Heart right ventricle (tissue), 16 donors: ENCODE measurements at regions of chr1 and their contacts with region 1.

Region 1: DNA sequence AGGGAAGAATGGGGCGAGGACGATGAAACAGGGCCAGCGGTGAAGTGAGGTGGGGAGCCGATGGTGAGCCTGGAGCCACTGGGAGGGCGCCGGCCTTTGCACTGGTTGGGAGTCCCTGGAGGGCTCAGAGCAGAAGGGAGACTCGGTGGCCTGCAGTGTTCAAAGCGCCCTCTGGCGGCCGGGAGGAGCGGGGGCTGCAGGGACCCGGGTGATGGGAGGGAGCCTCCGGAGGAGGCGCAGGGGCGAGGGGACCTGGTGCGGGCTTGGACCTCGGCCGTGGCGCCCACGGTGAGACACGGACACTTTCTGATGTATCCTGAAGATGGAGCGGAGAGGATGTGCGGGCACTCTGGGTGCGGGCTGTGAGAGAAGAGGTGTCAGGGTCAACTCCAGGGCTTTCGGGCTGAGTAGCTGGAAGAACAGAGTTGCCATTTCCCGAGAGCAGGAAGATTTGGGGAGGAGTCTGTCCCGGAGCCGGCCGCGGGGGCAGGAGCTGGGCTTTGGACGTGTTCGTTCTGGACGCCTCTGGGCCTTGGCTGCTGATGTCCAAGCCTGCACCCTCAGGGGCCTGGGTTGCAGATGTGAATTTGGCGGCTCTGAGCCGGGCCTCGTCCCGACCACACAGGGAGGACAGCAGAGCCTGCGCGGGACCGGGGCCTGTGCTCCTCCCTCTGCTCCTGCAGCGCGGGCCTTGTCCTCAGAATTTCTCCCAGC is 29.7 kb downstream of the HEYL start:
- DNase-seq: peak; percentile 59 to 82
- ATAC-seq: peak; percentile 69 to 90 (median 80)
- H3K4me3 ChIP-seq: peak overlapping the region in 1 of 10 donors; percentile 1
- H3K27ac ChIP-seq: peak overlapping the region in 8 of 10 donors; percentile 22 to 53 (median 42)
- H3K4me1 ChIP-seq: peaks cover 3 to 16% (median 11%) of the 10 kb centered on the region in 9 donors
- H3K27me3 ChIP-seq: peaks cover 0 to 2% (median 0%) of the 10 kb centered on the region in 7 donors
- CTCF ChIP-seq: peak; percentile 36 to 94 (median 74)

Region 2: GRCh38 chr1:39653546-39654031 is 43.8 kb after region 1 on chr1:
- intact Hi-C with region 1: loop called (anchors 1 to 5 kb)
- DNase-seq: peak; percentile 74 to 82
- ATAC-seq: peak; percentile 58 to 77 (median 64)
- H3K4me3 ChIP-seq: peak overlapping the region in 1 of 10 donors; percentile 10
- H3K27ac ChIP-seq: peak overlapping the region in 3 of 10 donors; percentile 66 to 76 (median 72)
- H3K4me1 ChIP-seq: peaks cover 7 to 67% (median 22%) of the 10 kb centered on the region in 9 donors
- H3K27me3 ChIP-seq: peaks cover 0 to 11% (median 0%) of the 10 kb centered on the region in 7 donors
- CTCF ChIP-seq: peak; percentile 87 to 96 (median 92)

Region 3: GRCh38 chr1:39711104-39711965 is 101.6 kb after region 1 on chr1:
- intact Hi-C with region 1: loop called in 5 of 10 experiments (anchors 5 kb)
- DNase-seq: no peak
- ATAC-seq: no peak
- H3K4me3 ChIP-seq: no peak overlapping the region
- H3K27ac ChIP-seq: no peak overlapping the region
- H3K4me1 ChIP-seq: peaks cover 0 to 3% (median 0%) of the 10 kb centered on the region in 9 donors
- H3K27me3 ChIP-seq: peaks cover 0 to 21% (median 17%) of the 10 kb centered on the region in 7 donors
- CTCF ChIP-seq: no peak

Region 4: DNA sequence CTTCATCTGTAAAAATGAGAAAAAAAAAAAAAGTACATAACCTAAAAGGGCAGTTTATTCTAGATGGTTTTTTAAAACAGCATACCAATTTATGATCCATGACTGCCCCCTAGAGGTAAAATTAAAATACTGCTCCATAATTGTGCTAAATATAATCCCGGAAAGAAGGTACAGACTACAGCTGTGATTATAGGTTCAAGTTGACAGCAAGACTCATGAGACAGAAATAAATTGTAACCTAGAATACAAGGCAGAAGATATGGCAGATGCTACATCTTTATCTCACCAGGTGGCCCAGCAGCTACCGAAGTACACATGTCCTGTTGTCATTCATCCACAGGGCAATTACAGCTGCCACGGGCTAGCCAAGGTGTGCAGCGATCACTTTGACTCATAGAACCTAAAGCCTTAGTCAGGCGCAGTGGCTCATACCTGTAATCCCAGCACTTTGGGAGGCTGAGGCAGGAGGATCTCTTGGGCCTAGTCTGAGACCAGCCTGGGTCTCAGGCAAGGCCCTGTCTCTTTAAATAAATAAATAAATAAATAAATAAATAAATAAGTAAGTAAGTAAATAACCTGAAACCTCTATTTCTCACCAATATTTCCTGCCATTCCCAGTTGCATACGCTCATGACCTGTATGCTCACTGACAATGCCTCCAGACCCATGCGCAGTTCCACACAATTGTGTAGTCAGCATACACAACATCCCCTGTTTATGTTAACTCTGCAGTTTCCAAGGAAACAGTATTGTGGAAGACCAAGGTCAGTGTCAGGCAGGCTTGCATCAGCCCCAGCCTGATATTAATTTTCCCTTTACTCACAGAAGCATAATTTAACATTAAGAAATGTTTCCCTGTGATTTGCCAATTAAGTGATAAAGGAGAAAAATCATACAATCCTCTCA is 110.6 kb after region 1 on chr1:
- intact Hi-C with region 1: loop called (anchors 1 to 5 kb)
- DNase-seq: no peak
- ATAC-seq: peak in 5 of 8 donors; percentile 47 to 72 (median 59)
- H3K4me3 ChIP-seq: no peak overlapping the region
- H3K27ac ChIP-seq: no peak overlapping the region
- H3K4me1 ChIP-seq: peaks cover 0 to 4% (median 0%) of the 10 kb centered on the region in 9 donors
- H3K27me3 ChIP-seq: peaks cover 0 to 51% (median 30%) of the 10 kb centered on the region in 7 donors
- CTCF ChIP-seq: peak; percentile 56 to 82 (median 73)

Region 5: DNA sequence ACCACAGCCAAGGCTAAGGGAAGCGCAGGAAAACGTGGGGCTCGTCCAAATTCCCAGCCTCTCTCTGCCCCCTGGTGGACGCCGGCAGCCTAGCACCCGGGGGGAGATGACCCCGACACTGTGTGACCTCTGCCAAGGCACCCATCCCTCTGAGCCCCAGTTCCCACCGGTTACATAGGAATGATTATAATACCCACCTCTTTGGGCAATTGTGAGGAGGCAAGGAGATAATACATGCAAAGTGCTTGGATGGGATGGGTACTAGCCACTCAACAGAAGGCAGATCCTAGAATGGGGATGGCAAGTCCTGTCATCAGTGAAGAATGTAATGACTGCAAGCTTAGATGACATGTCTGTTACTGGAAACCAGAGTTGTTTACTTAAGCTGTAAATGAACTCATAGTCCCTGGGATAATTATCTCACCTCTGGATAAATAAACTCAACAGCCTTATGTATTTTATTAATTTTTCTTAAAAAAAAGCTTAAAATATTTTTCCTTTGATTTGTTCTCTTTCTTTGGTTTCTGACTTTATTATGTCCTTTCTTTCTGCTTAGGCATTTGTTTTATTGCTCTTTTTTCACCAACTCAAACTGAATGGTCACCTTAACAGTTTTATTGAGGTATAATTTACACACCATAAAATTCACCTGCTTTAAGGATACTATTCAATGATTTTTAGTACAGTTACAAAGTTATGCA is 190.1 kb after region 1 on chr1:
- intact Hi-C with region 1: loop called in 1 of 10 experiments (anchors 5 kb)
- DNase-seq: peak; percentile 53 to 66
- ATAC-seq: peak; percentile 80 to 94 (median 86)
- H3K4me3 ChIP-seq: peak overlapping the region in 1 of 10 donors; percentile 36
- H3K27ac ChIP-seq: peak overlapping the region in 1 of 10 donors; percentile 85
- H3K4me1 ChIP-seq: peaks cover 0 to 16% (median 0%) of the 10 kb centered on the region in 9 donors
- H3K27me3 ChIP-seq: peaks cover 0 to 7% (median 0%) of the 10 kb centered on the region in 7 donors
- CTCF ChIP-seq: peak; percentile 56 to 76 (median 65)